Aorta (tissue), 5 donors: ENCODE measurements at regions of chr14 and their contacts with region 1.

Region 1: GRCh38 chr14:70972107-70972976 is 65.1 kb downstream of the PCNX1 start:
- DNase-seq: peak; percentile 85 to 89
- ATAC-seq: peak; percentile 81
- H3K4me3 ChIP-seq: no peak overlapping the region
- H3K27ac ChIP-seq: no peak overlapping the region
- H3K4me1 ChIP-seq: peaks cover 0 to 3% of the 10 kb centered on the region in 2 donors
- H3K27me3 ChIP-seq: no peaks in the 10 kb centered on the region

Region 2: DNA sequence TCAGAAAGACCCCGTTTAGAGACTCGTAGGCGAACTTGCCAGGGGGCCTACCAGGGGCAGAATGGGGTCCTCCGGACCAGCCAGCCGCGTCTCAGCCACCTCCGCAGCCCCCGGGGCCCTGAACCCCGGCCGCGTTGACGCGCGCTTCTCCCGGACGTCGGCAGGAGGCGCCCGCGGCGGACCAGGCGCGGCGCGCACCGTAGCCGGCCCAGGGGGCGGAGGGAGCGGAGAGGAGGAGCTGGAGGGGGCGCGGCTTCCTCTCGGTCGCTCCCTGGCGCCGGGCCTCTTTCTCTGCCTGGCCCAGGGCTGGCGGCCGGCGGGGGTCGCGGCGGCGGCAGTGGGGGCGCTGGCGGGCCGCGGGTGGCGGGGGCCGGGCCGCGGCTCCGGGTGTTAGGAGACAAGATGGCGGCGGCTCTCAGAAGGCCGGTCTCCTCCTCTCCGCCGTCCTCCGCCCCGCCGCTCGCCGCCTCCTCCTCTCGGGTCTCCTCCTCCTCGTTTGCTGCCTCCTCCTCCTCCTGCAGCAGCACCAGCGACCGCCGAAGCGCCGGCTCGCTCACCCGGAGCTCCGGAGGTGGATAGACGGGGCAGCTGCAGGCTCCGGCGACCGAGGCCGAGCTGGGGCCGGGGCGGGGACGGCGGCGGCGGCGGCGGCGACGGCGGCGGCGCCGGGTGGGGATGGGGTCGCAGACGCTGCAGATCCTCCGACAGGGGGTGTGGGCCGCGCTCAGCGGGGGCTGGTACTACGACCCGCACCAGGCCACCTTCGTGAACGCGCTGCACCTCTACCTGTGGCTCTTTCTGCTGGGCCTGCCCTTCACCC is 65.0 kb before region 1 on chr14 and contains the start of gene PCNX1:
- intact Hi-C with region 1: loop called (anchors 5 to 10 kb)
- DNase-seq: peak; percentile 93 to 96
- ATAC-seq: peak; percentile 95
- H3K4me3 ChIP-seq: peak within 1 kb of the TSS; percentile 36 to 72
- H3K27ac ChIP-seq: peak within 1 kb of the TSS; percentile 97 to 98
- H3K4me1 ChIP-seq: peaks cover 9 to 10% of the 10 kb centered on the region in 2 donors
- H3K27me3 ChIP-seq: no peaks in the 10 kb centered on the region
- total RNA-seq, gene PCNX1: 72.8 to 96.4 TPM